ENCODE measurements at regions of chr9 and their contacts with region 1.

Region 1: GRCh38 chr9:88663771-88664419 is 128.9 kb downstream of the NXNL2 start:
- DNase-seq: no peak
- H3K4me3 Mint-ChIP-seq: no peak overlapping the region
- H3K27ac Mint-ChIP-seq: no peak overlapping the region
- H3K4me1 Mint-ChIP-seq: no peaks in the 10 kb centered on the region
- H3K27me3 Mint-ChIP-seq: peaks cover 8% of the 10 kb centered on the region

Region 2: GRCh38 chr9:88596376-88596775 is 67.5 kb before region 1 on chr9:
- intact Hi-C with region 1: no loop called
- DNase-seq: no peak
- H3K4me3 Mint-ChIP-seq: no peak overlapping the region
- H3K27ac Mint-ChIP-seq: no peak overlapping the region
- H3K4me1 Mint-ChIP-seq: peaks cover 2% of the 10 kb centered on the region
- H3K27me3 Mint-ChIP-seq: peaks cover 30% of the 10 kb centered on the region

Region 3: GRCh38 chr9:89000973-89001916 is 337.4 kb after region 1 on chr9:
- intact Hi-C with region 1: loop called (anchors 2 kb)
- DNase-seq: peak; percentile 93
- H3K4me3 Mint-ChIP-seq: no peak overlapping the region
- H3K27ac Mint-ChIP-seq: no peak overlapping the region
- H3K4me1 Mint-ChIP-seq: peaks cover 4% of the 10 kb centered on the region
- H3K27me3 Mint-ChIP-seq: peaks cover 18% of the 10 kb centered on the region

Measured in activated CD4-positive, alpha-beta T cell treated with anti-CD3 and anti-CD28 coated beads, Interleukin-2, amount 10 ng/mL, durations not matched to agents 24 days and 14 days (primary cell).